Mammary epithelial cell (primary cell): ENCODE measurements at regions of chr15 and their contacts with region 1.

Region 1: GRCh38 chr15:55168329-55168974 is 28.3 kb downstream of the RSL24D1 start:
- DNase-seq: peak; percentile 54
- H3K4me3 ChIP-seq: no peak overlapping the region
- H3K27ac ChIP-seq: no peak overlapping the region
- H3K4me1 ChIP-seq: no peaks in the 10 kb centered on the region
- H3K27me3 ChIP-seq: no peaks in the 10 kb centered on the region
- CTCF ChIP-seq: peak; percentile 63 to 81

Region 2: DNA sequence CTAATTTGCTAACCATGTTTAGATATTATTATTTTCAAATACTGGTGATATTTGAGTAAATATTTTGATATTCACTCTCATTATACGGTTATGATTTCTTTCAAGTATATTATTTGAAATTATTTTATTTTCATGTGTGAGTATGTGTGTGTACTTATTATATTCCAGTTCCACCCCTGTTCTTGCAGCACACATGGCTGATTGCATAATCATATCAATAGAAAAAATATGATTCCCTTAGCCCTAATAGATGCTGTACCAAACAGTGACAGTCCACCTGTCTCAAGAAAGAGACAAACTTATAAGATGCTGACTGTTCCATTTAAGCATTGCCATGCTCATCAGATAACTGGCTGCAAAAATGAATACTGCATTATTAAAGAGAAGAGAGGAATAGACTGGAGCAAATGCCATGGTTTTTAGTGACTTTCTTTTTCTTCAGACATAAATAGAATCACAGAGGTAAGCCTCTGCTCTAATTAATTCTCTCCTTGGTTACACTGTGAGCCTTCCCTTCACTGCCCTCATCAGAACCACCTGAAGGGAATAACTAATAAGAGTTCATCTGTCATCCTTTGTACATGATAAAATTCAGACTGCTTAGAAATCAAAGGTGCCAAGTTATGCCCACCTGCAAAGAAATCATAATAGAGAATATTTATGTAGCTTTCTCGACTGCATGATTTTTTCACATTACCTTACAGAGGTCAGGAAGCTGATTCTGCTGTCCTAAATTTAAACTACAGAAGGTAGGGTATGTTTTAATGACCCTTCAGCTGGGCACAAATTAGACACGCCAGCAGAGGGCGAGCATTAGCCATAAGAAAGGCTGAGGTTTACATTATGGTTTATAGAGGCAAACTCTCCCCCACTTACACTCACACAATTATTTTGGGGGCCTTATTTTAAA is 1205.9 kb before region 1 on chr15:
- CTCF ChIA-PET with region 1: no interaction called
- dilution Hi-C with region 1: no loop called
- in situ Hi-C with region 1: loop called in 1 of 2 experiments (anchors 25 kb)
- intact Hi-C with region 1: loop called (anchors 2 kb)
- DNase-seq: no peak
- H3K4me3 ChIP-seq: no peak overlapping the region
- H3K27ac ChIP-seq: no peak overlapping the region
- H3K4me1 ChIP-seq: no peaks in the 10 kb centered on the region
- H3K27me3 ChIP-seq: peaks cover 4% of the 10 kb centered on the region
- CTCF ChIP-seq: peak; percentile 74

Region 3: DNA sequence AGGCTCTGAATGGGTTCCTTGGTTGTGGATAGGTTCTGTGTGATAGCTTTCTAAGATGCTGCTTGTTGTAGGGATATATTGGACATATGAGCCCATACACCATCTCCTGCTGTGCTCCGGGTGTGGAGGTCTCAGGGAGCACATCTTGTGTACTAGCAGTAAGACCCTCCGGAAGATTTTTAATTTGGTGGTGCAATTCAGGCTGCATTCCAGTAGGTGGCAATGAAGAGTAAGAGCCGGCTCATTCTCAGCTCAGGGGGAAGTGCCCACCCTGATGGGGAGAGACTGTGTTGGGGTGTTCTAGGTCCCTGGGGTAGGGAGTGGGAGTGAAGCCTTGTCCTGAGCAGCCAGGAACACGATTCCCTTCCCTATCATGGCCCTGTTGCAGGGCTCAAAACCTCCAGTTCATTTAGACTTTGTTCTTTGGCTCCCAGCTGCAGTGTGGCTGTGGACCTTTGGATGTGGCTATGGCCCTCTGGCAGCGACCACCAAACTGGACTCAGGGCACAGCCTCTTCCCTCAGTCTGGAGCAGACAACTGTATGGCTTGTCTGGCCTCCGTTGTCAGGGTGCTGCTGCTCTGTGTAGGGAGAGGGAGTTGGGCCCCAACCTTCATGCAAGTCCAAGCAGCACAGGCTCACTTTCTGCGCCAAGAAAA is 1085.5 kb before region 1 on chr15:
- CTCF ChIA-PET with region 1: no interaction called
- dilution Hi-C with region 1: no loop called
- in situ Hi-C with region 1: no loop called
- intact Hi-C with region 1: loop called (anchors 10 kb)
- DNase-seq: no peak
- H3K4me3 ChIP-seq: no peak overlapping the region
- H3K27ac ChIP-seq: no peak overlapping the region
- H3K4me1 ChIP-seq: no peaks in the 10 kb centered on the region
- H3K27me3 ChIP-seq: no peaks in the 10 kb centered on the region
- CTCF ChIP-seq: peak; percentile 51 to 68